ENCODE measurements at regions of chr3 and their contacts with region 1.

Region 1: GRCh38 chr3:39000008-39000450 is 51.7 kb downstream of the SCN11A start:
- DNase-seq: peak; percentile 70
- H3K4me3 ChIP-seq: no peak overlapping the region
- H3K27ac ChIP-seq: no peak overlapping the region
- H3K4me1 ChIP-seq: no peaks in the 10 kb centered on the region
- H3K27me3 ChIP-seq: no peaks in the 10 kb centered on the region
- CTCF ChIP-seq: peak; percentile 62 to 71
- POLR2A ChIP-seq: no peak

Region 2: DNA sequence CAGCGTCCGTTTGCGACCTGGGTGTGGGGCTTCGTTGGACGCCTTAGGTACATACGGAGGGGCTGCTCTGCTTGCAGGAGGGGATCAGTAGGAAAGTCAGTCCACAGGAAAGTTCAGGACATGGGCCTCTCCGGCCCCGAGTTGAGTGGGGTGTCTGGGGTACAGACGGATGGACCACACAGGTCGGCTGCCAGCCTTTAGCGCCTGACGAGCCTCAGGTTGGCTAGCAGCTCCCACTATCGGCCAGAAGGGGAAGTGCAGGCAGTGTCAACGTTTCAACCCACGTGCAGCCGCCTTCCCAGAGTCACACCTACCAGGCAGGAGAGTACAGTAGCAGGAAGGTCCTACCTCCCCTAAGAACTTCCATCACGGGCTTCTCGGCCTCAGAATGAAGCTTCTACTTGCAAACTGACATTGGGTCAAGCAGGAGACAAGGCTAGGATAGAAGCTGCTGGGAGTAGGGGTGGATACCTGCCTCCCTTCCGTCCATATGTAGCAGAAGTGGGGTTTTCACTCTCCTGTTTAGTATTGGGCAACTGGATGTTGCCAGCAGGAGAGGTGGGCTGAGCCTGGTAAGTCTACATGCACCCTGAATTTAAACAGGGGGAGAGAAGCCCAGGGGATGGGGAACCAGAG is 348.8 kb before region 1 on chr3:
- CTCF ChIA-PET with region 1: interaction called, 13 read pairs
- POLR2A ChIA-PET with region 1: no interaction called
- dilution Hi-C with region 1: no loop called
- intact Hi-C with region 1: loop called (anchors 1 kb)
- DNase-seq: peak; percentile 71
- H3K4me3 ChIP-seq: no peak overlapping the region
- H3K27ac ChIP-seq: no peak overlapping the region
- H3K4me1 ChIP-seq: peaks cover 10% of the 10 kb centered on the region
- H3K27me3 ChIP-seq: no peaks in the 10 kb centered on the region
- CTCF ChIP-seq: peak; percentile 93 to 100
- POLR2A ChIP-seq: no peak

Region 3: GRCh38 chr3:38738630-38739395 is 261.2 kb before region 1 on chr3:
- CTCF ChIA-PET with region 1: interaction called, 10 read pairs
- POLR2A ChIA-PET with region 1: no interaction called
- dilution Hi-C with region 1: no loop called
- intact Hi-C with region 1: loop called (anchors 1 kb)
- DNase-seq: peak; percentile 73
- H3K4me3 ChIP-seq: no peak overlapping the region
- H3K27ac ChIP-seq: peak overlapping the region; percentile 10
- H3K4me1 ChIP-seq: peaks cover 3% of the 10 kb centered on the region
- H3K27me3 ChIP-seq: no peaks in the 10 kb centered on the region
- CTCF ChIP-seq: peak; percentile 84 to 89
- POLR2A ChIP-seq: no peak

Region 4: DNA sequence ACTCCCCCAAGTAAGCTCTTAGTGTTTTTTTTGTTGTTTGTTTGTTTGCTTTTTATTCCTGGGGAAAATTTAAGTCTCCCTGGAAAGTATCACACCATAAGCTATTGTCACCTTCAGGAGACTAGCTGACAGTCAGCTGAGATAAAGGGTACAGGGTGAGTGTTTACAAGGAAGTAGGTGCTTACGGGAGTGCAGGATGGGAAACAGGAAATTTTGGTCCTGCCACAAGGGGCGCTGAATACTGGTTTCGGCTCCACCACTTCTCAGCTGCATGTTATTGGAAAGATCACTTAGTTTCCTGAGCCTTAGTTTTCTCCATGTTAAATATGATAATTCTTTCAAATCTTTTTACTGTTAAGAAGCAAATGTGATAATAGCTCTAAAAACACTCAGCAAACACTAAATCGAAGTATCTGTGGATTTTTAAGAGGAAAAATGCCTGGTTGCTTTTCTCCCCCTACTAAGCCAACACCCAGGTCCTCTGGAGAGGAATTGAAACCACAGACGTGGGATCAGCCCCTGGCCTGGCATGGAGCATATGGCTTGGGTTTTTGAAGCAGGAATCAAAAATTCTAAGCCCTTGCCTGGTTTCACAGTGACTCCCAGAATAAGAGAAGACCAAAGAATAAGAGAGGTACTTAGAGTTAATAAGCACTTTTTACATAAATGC is 38.9 kb before region 1 on chr3:
- CTCF ChIA-PET with region 1: interaction called, 24 read pairs
- POLR2A ChIA-PET with region 1: no interaction called
- dilution Hi-C with region 1: no loop called
- intact Hi-C with region 1: no loop called
- DNase-seq: peak; percentile 57
- H3K4me3 ChIP-seq: no peak overlapping the region
- H3K27ac ChIP-seq: no peak overlapping the region
- H3K4me1 ChIP-seq: no peaks in the 10 kb centered on the region
- H3K27me3 ChIP-seq: peaks cover 3 to 4% of the 10 kb centered on the region in 2 experiments
- CTCF ChIP-seq: peak; percentile 74 to 76
- POLR2A ChIP-seq: no peak

Region 5: GRCh38 chr3:39013289-39013688 is 13.3 kb after region 1 on chr3:
- CTCF ChIA-PET with region 1: interaction called, 24 read pairs
- POLR2A ChIA-PET with region 1: no interaction called
- dilution Hi-C with region 1: no loop called
- intact Hi-C with region 1: no loop called
- DNase-seq: no peak
- H3K4me3 ChIP-seq: no peak overlapping the region
- H3K27ac ChIP-seq: no peak overlapping the region
- H3K4me1 ChIP-seq: no peaks in the 10 kb centered on the region
- H3K27me3 ChIP-seq: peaks cover 0 to 4% of the 10 kb centered on the region in 2 experiments
- CTCF ChIP-seq: no peak
- POLR2A ChIP-seq: no peak

Measured in endothelial cell of umbilical vein (primary cell).